AG04450 (cell line): ENCODE measurements at regions of chr4 and their contacts with region 1.

Region 1: GRCh38 chr4:38319456-38320342 is 344.3 kb upstream of the KLF3 start:
- DNase-seq: peak; percentile 61
- H3K4me3 ChIP-seq: no peak overlapping the region
- H3K27ac ChIP-seq: no peak overlapping the region
- H3K27me3 ChIP-seq: no peaks in the 10 kb centered on the region
- CTCF ChIP-seq: peak; percentile 99

Region 2: GRCh38 chr4:37936889-37937498 is 382.7 kb before region 1 on chr4:
- CTCF ChIA-PET with region 1: no interaction called
- POLR2A ChIA-PET with region 1: no interaction called
- DNase-seq: no peak
- H3K4me3 ChIP-seq: no peak overlapping the region
- H3K27ac ChIP-seq: no peak overlapping the region
- H3K27me3 ChIP-seq: peaks cover 7% of the 10 kb centered on the region
- CTCF ChIP-seq: 0 out of 2 replicates have a peak, but pooled peaks have one; percentile 3

Region 3: DNA sequence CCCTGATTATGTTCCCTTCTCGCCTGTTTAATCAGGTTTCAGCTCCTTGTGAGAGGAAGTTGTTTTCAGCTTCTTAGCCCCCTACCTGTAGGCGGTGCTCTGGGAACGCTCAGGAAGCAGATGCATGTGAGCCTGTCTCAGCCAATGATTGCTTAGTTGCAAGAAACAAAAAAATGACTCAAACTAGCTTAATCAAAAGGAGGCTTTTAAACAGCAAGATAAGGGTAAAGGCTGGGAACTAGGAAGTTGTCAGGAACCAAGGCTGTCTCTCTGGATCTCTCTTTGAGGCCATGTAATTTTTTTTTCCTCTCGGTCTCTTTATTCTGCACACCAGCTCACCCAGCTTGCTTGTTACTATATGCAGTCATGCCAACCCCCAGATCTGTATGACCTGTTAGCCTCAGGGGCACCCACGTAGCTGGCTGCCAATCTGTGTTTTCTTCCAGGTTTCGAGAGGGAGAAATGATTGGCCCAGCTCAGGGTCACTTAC is 250.4 kb before region 1 on chr4:
- CTCF ChIA-PET with region 1: interaction called, 10 read pairs
- POLR2A ChIA-PET with region 1: no interaction called
- DNase-seq: peak; percentile 30
- H3K4me3 ChIP-seq: no peak overlapping the region
- H3K27ac ChIP-seq: no peak overlapping the region
- H3K27me3 ChIP-seq: no peaks in the 10 kb centered on the region
- CTCF ChIP-seq: peak; percentile 65

Region 4: GRCh38 chr4:38334810-38335537 is 15.3 kb after region 1 on chr4:
- CTCF ChIA-PET with region 1: interaction called, 16 read pairs
- POLR2A ChIA-PET with region 1: interaction called, 5 read pairs
- DNase-seq: no peak
- H3K4me3 ChIP-seq: no peak overlapping the region
- H3K27ac ChIP-seq: no peak overlapping the region
- H3K27me3 ChIP-seq: peaks cover 2% of the 10 kb centered on the region
- CTCF ChIP-seq: no peak

Region 5: DNA sequence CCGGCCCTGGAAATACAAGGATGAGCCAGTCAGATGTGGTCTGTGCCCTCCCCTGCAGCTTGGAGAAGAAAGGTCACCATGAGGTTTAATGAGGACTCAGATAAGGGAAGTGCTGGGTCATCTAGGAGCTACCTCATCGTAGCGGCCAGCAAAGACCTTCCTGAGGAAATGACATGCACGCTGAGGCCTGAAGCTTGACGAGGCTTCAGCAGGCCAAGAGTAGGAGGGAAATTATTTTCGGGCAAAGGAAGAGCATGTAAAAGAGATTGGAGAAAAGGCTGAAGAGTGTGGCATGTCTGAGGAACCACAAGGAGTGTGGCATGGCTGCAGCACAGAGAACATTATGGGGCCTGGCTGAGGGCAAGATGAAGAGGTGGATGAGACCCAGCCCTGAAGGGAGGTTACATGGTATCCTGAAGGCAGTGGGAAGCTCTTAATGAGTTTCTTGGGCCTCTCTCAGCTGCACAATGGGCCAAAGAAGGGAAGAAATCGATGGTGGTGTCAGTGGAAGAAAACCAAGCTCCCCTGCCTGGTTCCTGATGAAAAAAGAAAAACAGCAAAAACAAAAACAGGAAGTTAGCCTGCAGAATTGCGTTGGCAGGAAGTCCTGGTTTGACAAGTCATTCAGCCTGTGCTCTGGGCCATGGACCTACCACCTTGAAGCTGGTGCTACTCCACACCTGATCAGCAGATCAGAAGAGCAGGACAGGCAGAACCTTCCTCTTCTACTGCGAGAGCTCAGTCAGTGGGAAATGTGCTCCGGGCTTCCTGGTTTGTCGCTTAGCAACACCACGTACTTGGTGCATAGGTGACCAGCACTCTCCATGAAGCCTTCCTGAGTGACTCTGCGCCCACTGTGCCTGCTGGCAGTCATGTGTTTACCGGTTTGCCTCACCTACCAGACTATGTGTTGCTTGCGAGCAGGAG is 209.8 kb after region 1 on chr4:
- CTCF ChIA-PET with region 1: no interaction called
- POLR2A ChIA-PET with region 1: no interaction called
- DNase-seq: no peak
- H3K4me3 ChIP-seq: no peak overlapping the region
- H3K27ac ChIP-seq: no peak overlapping the region
- H3K27me3 ChIP-seq: peaks cover 5% of the 10 kb centered on the region
- CTCF ChIP-seq: no peak

Region 6: DNA sequence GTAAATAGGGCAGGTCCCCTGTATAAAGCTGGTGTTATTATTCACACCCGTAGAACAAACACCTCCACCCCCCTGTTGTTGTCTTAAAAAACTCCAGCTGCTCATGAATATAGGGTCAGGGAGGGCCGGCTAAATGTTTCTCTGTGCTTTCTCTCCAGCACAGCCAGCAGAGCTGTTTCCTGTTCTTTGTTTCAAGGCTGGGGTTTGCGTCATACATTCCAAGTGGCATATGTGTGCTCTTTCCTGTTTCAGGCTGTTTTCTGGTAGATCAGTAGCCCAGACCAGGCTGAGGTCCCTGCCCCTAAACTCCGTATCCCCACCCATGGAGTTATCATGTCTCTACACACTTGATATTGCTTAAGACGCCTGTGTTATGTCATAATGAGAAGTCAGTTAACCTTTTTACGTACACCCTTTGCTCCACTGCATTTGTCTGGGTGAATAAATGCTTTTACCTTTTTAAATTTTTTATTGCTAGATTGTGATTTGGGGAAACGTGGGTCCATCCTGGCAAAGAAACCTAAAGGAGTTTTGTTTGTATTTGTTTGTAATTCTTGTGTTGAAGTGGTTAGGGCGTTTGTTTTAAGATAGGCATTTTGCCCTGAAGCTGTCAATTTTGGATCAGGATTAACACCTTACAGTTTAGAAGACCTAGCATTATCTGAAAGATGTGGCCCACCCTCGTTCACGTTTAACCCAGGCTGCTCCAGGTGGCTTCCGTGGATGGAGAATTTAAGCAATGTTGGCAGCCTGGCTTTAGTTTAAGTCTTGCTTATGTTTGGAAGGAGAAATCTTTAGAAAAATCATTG is 347.6 kb after region 1 on chr4:
- CTCF ChIA-PET with region 1: interaction called, 25 read pairs
- POLR2A ChIA-PET with region 1: interaction called, 10 read pairs
- DNase-seq: peak; percentile 97
- H3K4me3 ChIP-seq: peak overlapping the region; percentile 73
- H3K27ac ChIP-seq: peak overlapping the region; percentile 99
- H3K27me3 ChIP-seq: no peaks in the 10 kb centered on the region
- CTCF ChIP-seq: no peak

Region 7: GRCh38 chr4:38681281-38681991 is 361.7 kb after region 1 on chr4:
- CTCF ChIA-PET with region 1: interaction called, 38 read pairs
- POLR2A ChIA-PET with region 1: interaction called, 3 read pairs
- DNase-seq: peak; percentile 81
- H3K4me3 ChIP-seq: no peak overlapping the region
- H3K27ac ChIP-seq: peak overlapping the region; percentile 92
- H3K27me3 ChIP-seq: no peaks in the 10 kb centered on the region
- CTCF ChIP-seq: no peak

Region 8: DNA sequence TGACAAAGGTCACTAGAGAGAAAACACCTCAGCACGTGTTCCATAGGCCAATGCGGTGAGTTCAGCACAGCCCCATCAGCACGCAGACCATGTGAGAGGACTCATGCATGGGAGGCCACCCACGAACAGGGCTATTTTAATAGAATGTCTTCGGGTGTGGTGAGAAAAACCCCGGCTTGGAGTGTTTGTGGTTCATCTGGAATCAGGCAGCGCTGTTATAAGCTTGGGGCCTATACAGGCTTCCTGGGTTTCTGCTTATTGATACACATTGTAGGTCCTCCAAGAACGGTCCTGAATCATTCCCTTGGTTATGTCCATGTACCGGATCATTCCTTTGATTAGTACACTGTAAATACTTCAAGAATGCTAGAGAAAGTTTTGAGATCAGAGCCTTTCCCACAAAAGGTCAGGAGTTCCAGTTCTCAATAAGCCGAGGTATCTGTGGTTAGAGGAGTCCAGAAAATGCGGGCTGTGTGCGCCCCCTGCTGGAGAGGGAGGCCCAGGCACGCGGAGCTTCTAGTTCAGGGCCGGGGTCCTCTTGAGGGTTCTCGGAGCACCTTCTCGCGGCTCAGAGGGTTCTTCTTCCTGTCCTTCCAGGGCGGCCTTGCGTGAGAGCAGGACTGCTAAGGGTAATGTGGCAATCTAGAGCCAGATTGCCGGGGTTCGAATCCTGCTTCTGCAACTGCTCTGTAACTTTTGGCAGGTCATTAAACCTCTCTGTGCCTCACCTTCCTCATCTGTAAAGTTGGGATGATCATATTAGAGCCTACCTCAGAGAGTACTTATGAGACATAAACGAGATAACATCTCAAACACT is 411.3 kb after region 1 on chr4:
- CTCF ChIA-PET with region 1: interaction called, 22 read pairs
- POLR2A ChIA-PET with region 1: no interaction called
- DNase-seq: peak; percentile 88
- H3K4me3 ChIP-seq: no peak overlapping the region
- H3K27ac ChIP-seq: no peak overlapping the region
- H3K27me3 ChIP-seq: peaks cover 8% of the 10 kb centered on the region
- CTCF ChIP-seq: peak; percentile 95